Gastrocnemius medialis (tissue), 4 donors: ENCODE measurements at regions of chr3 and their contacts with region 1.

Region 1: GRCh38 chr3:177050501-177051237 is 146.6 kb downstream of the TBL1XR1 start:
- DNase-seq: no peak
- ATAC-seq: peak in 1 of 2 donors; percentile 84
- H3K4me3 ChIP-seq: no peak overlapping the region
- H3K27ac ChIP-seq: peak overlapping the region in 1 of 4 donors; percentile 3
- H3K4me1 ChIP-seq: peaks cover 6 to 11% of the 10 kb centered on the region in 2 donors
- H3K27me3 ChIP-seq: no peaks in the 10 kb centered on the region
- CTCF ChIP-seq: peak; percentile 50 to 71 (median 57)
- POLR2A ChIP-seq: no peak

Region 2: GRCh38 chr3:177062052-177062732 is 11.5 kb after region 1 on chr3:
- in situ Hi-C with region 1: no loop called
- intact Hi-C with region 1: no loop called
- DNase-seq: no peak
- ATAC-seq: no peak
- H3K4me3 ChIP-seq: no peak overlapping the region
- H3K27ac ChIP-seq: no peak overlapping the region
- H3K4me1 ChIP-seq: peaks cover 54 to 83% of the 10 kb centered on the region in 2 donors
- H3K27me3 ChIP-seq: no peaks in the 10 kb centered on the region
- CTCF ChIP-seq: no peak
- POLR2A ChIP-seq: no peak

Region 3: DNA sequence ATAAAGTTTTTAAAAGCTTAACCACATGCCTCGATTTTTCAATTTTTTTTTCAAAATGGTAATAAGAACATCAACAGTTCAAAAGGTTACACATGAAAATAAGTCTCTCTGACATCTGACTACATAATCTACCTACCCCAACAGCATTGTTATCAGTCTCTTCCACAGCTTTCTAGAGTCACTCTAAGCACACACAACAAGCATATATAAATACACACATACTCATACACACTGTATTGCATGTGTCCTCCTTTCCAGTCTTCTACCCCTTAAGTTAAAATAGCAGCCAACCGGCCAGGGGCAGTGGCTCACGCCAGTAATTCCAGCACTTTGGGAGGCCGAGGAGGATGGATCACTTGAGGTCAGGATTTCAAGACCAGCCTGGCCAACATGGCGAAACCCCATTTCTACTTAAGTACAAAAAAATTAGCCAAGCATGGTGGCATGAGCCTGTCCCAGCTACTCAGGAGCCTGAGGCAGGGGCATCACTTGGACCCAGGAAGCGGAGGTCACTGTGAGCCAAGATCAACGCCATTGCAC is 134.4 kb after region 1 on chr3:
- in situ Hi-C with region 1: loop called in 3 of 4 experiments (anchors 10 to 25 kb)
- intact Hi-C with region 1: no loop called
- DNase-seq: no peak
- ATAC-seq: peak in 1 of 2 donors; percentile 30
- H3K4me3 ChIP-seq: no peak overlapping the region
- H3K27ac ChIP-seq: peak overlapping the region in 1 of 4 donors; percentile 35
- H3K4me1 ChIP-seq: peaks cover 36 to 43% of the 10 kb centered on the region in 2 donors
- H3K27me3 ChIP-seq: no peaks in the 10 kb centered on the region
- CTCF ChIP-seq: no peak
- POLR2A ChIP-seq: no peak

Region 4: GRCh38 chr3:177378168-177378567 is 327.5 kb after region 1 on chr3:
- in situ Hi-C with region 1: loop called in 2 of 4 experiments (anchors 25 kb)
- intact Hi-C with region 1: loop called (anchors 1 kb)
- DNase-seq: no peak
- ATAC-seq: no peak
- H3K4me3 ChIP-seq: no peak overlapping the region
- H3K27ac ChIP-seq: no peak overlapping the region
- H3K4me1 ChIP-seq: peaks cover 0 to 5% of the 10 kb centered on the region in 2 donors
- H3K27me3 ChIP-seq: no peaks in the 10 kb centered on the region
- CTCF ChIP-seq: no peak
- POLR2A ChIP-seq: no peak

Region 5: GRCh38 chr3:177516158-177517011 is 465.7 kb after region 1 on chr3:
- in situ Hi-C with region 1: no loop called
- intact Hi-C with region 1: loop called (anchors 10 kb)
- DNase-seq: peak; percentile 32 to 56
- ATAC-seq: peak; percentile 70 to 90
- H3K4me3 ChIP-seq: no peak overlapping the region
- H3K27ac ChIP-seq: peak overlapping the region; percentile 33 to 78 (median 52)
- H3K4me1 ChIP-seq: peaks cover 40 to 43% of the 10 kb centered on the region in 2 donors
- H3K27me3 ChIP-seq: no peaks in the 10 kb centered on the region
- CTCF ChIP-seq: no peak
- POLR2A ChIP-seq: no peak